Dendritic cell treated with granulocyte-macrophage colony-stimulating factor and Interleukin-4, amounts not matched to agents 40 ng/mL and 50 ng/mL, for 4 days (primary cell): ENCODE measurements at regions of chr19 and their contacts with region 1.

Region 1: DNA sequence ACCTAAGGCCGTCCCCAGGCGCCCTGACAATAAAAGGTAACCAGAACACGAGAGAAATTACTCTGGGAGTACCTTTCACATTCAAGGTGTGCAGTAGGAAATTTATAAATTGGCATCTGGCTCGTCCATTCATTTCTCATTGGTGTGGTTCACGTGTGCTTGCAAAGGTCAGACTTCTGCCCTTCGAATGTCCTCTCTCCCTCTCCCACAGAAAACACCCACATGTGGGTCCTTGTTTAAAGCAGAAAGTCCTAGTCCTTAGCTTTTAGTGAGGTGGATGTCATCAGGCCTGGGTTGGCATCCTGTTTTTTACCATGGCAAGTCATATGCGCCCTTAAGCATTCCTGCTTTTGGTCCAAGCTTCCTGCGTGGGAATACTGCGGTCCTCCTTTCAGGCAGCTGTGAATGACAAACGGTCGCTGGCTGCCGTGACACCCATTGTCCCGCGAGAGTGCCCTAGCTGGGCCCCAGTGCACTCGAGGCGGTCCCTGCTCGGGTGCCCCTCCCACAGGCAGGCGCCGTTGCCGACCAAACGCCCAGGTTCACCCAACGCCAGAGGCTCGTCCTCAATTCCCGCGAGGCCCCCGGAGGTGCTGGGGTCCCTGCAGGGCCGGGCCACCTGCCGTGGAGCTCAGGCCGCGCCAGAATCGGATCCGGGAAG is at the start of gene NUDT19:
- H3K4me3 Mint-ChIP-seq: peak within 1 kb of the TSS; percentile 86
- H3K27ac Mint-ChIP-seq: peak within 1 kb of the TSS; percentile 94
- H3K4me1 Mint-ChIP-seq: peaks cover 58% of the 10 kb centered on the region
- H3K27me3 Mint-ChIP-seq: no peaks in the 10 kb centered on the region

Region 2: GRCh38 chr19:32498648-32499200 is 192.7 kb before region 1 on chr19:
- intact Hi-C with region 1: no loop called
- H3K4me3 Mint-ChIP-seq: no peak overlapping the region
- H3K27ac Mint-ChIP-seq: no peak overlapping the region
- H3K4me1 Mint-ChIP-seq: peaks cover 5% of the 10 kb centered on the region
- H3K27me3 Mint-ChIP-seq: peaks cover 11% of the 10 kb centered on the region

Region 3: DNA sequence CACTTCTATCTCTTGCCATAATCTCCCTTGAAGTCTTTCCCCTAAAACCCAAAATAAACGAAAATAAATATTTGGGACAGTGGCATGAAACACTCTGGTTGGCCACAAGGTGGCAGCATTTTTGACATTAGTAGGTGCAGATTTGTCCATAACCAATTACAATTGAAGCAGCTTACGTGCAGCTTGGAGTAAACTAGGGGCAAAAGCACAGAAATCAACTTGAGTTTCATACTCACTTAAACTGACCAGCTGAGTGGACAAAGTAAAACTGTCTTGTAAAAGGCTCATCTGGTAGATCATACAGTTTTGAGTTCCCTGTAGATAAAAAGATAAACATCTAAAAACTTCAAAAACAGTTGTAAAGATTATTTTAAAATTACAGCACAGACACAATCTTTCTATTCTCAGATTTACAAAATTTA is 91.7 kb before region 1 on chr19:
- intact Hi-C with region 1: loop called (anchors 5 kb)
- H3K4me3 Mint-ChIP-seq: no peak overlapping the region
- H3K27ac Mint-ChIP-seq: no peak overlapping the region
- H3K4me1 Mint-ChIP-seq: no peaks in the 10 kb centered on the region
- H3K27me3 Mint-ChIP-seq: no peaks in the 10 kb centered on the region

Region 4: GRCh38 chr19:32611161-32611560 is 80.3 kb before region 1 on chr19:
- intact Hi-C with region 1: no loop called
- H3K4me3 Mint-ChIP-seq: no peak overlapping the region
- H3K27ac Mint-ChIP-seq: no peak overlapping the region
- H3K4me1 Mint-ChIP-seq: no peaks in the 10 kb centered on the region
- H3K27me3 Mint-ChIP-seq: no peaks in the 10 kb centered on the region

Region 5: GRCh38 chr19:32630338-32630737 is 61.1 kb before region 1 on chr19:
- intact Hi-C with region 1: no loop called
- H3K4me3 Mint-ChIP-seq: no peak overlapping the region
- H3K27ac Mint-ChIP-seq: no peak overlapping the region
- H3K4me1 Mint-ChIP-seq: no peaks in the 10 kb centered on the region
- H3K27me3 Mint-ChIP-seq: no peaks in the 10 kb centered on the region

Region 6: GRCh38 chr19:32674959-32675719 is 16.3 kb before region 1 on chr19 and contains the start of gene ANKRD27:
- intact Hi-C with region 1: loop called (anchors 1 kb)
- H3K4me3 Mint-ChIP-seq: peak within 1 kb of the TSS; percentile 90
- H3K27ac Mint-ChIP-seq: peak within 1 kb of the TSS; percentile 75
- H3K4me1 Mint-ChIP-seq: peaks cover 43% of the 10 kb centered on the region
- H3K27me3 Mint-ChIP-seq: peaks cover 44% of the 10 kb centered on the region